Ascending aorta (tissue), 2 donors: ENCODE measurements at regions of chr13 and their contacts with region 1.

Region 1: GRCh38 chr13:50357586-50358118 is 342.4 kb downstream of the KCNRG start:
- DNase-seq: peak in 1 of 2 donors; percentile 79
- H3K4me3 ChIP-seq: no peak overlapping the region
- H3K27ac ChIP-seq: peak overlapping the region; percentile 74 to 78
- H3K4me1 ChIP-seq: peaks cover 0 to 19% of the 10 kb centered on the region in 2 donors
- H3K27me3 ChIP-seq: no peaks in the 10 kb centered on the region
- CTCF ChIP-seq: no peak

Region 2: GRCh38 chr13:48595431-48596429 is 1761.9 kb before region 1 on chr13:
- intact Hi-C with region 1: no loop called
- DNase-seq: no peak
- H3K4me3 ChIP-seq: no peak overlapping the region
- H3K27ac ChIP-seq: no peak overlapping the region
- H3K4me1 ChIP-seq: no peaks in the 10 kb centered on the region
- H3K27me3 ChIP-seq: no peaks in the 10 kb centered on the region
- CTCF ChIP-seq: peak; percentile 31 to 64 (median 47)

Region 3: GRCh38 chr13:50236898-50237318 is 120.7 kb before region 1 on chr13:
- intact Hi-C with region 1: no loop called
- DNase-seq: no peak
- H3K4me3 ChIP-seq: no peak overlapping the region
- H3K27ac ChIP-seq: no peak overlapping the region
- H3K4me1 ChIP-seq: no peaks in the 10 kb centered on the region
- H3K27me3 ChIP-seq: no peaks in the 10 kb centered on the region
- CTCF ChIP-seq: no peak

Region 4: GRCh38 chr13:50410921-50411712 is 53.5 kb after region 1 on chr13:
- intact Hi-C with region 1: loop called (anchors 5 kb)
- DNase-seq: peak in 1 of 2 donors; percentile 69
- H3K4me3 ChIP-seq: no peak overlapping the region
- H3K27ac ChIP-seq: peak overlapping the region; percentile 61 to 65
- H3K4me1 ChIP-seq: peaks cover 14 to 22% of the 10 kb centered on the region in 2 donors
- H3K27me3 ChIP-seq: no peaks in the 10 kb centered on the region
- CTCF ChIP-seq: no peak